ENCODE measurements at regions of chr11 and their contacts with region 1.

Region 1: GRCh38 chr11:8263769-8264410 is at the start of gene LMO1:
- DNase-seq: peak; percentile 70 to 90 (median 85)
- ATAC-seq: peak; percentile 86
- H3K4me3 ChIP-seq: no peak within 1 kb of the TSS
- H3K4me1 ChIP-seq: peaks cover 24% of the 10 kb centered on the region
- CTCF ChIP-seq: peak; percentile 63
- total RNA-seq, gene LMO1: 0.70 TPM in 1 of 3 donors, not detected in the others

Region 2: GRCh38 chr11:8225589-8226036 is 38.3 kb before region 1 on chr11:
- intact Hi-C with region 1: loop called in 1 of 2 experiments (anchors 5 kb)
- DNase-seq: peak in 2 of 3 donors; percentile 75 to 82
- ATAC-seq: peak; percentile 21
- H3K4me3 ChIP-seq: no peak overlapping the region
- H3K4me1 ChIP-seq: peaks cover 3% of the 10 kb centered on the region
- CTCF ChIP-seq: peak; percentile 70

Region 3: GRCh38 chr11:8604078-8604723 is 340.3 kb after region 1 on chr11:
- intact Hi-C with region 1: no loop called
- DNase-seq: peak in 2 of 3 donors; percentile 69 to 72
- ATAC-seq: peak; percentile 89
- H3K4me3 ChIP-seq: no peak overlapping the region
- H3K4me1 ChIP-seq: no peaks in the 10 kb centered on the region
- CTCF ChIP-seq: peak; percentile 47